Activated naive CD4-positive, alpha-beta T cell treated with anti-CD3 and anti-CD28 coated beads for 36 hours (primary cell): ENCODE measurements at regions of chr5 and their contacts with region 1.

Region 1: DNA sequence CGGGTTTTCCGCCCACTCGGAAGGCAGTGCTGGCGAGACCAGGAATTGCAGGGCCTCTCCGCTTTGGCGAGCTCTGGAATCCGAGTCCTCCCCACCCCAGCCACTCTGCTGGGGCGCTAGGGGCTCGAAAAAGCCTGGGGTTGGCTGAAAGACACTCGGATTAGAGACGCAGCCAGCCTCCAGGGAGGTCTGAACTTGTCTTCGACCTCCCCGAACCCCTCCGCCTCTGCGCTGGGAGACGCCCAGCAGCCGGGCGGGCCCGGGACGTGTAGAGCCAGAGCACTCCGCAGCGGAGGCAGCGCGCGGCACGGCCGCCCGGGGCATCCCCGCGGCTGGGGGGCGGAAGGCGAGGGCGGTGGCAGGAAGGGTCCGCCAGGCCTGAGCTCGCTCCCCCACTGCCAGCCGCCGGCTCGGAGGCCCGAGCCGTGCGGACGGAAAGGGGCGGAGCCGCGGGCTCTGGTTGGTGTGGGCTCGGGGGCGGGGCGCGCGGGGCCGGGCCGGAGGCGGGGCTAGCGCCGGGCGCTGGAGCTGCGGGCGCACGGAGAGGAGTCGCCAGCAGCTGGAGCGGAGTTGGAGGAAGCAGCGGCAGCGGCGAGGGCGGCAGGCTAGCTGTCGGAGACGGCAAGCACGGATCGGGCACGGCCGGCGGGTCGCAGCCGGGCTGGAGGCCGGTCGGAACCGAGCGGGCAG is at the start of gene PIK3R1:
- DNase-seq: peak; percentile 93
- H3K4me3 Mint-ChIP-seq: peak within 1 kb of the TSS; percentile 91
- H3K27ac Mint-ChIP-seq: peak within 1 kb of the TSS; percentile 95
- H3K4me1 Mint-ChIP-seq: peaks cover 42% of the 10 kb centered on the region
- H3K27me3 Mint-ChIP-seq: no peaks in the 10 kb centered on the region
- total RNA-seq, gene PIK3R1: 28.5 to 31.4 TPM

Region 2: GRCh38 chr5:68230285-68230684 is 14.9 kb after region 1 on chr5:
- CTCF ChIA-PET with region 1: interaction called, 5 read pairs
- intact Hi-C with region 1: loop called (anchors 1 kb)
- DNase-seq: no peak
- H3K4me3 Mint-ChIP-seq: no peak overlapping the region
- H3K27ac Mint-ChIP-seq: no peak overlapping the region
- H3K4me1 Mint-ChIP-seq: peaks cover 79% of the 10 kb centered on the region
- H3K27me3 Mint-ChIP-seq: no peaks in the 10 kb centered on the region

Region 3: GRCh38 chr5:68239487-68239886 is 24.1 kb after region 1 on chr5:
- CTCF ChIA-PET with region 1: interaction called, 5 read pairs
- intact Hi-C with region 1: loop called (anchors 1 kb)
- DNase-seq: peak; percentile 93
- H3K4me3 Mint-ChIP-seq: peak overlapping the region; percentile 36
- H3K27ac Mint-ChIP-seq: peak overlapping the region; percentile 72
- H3K4me1 Mint-ChIP-seq: peaks cover 80% of the 10 kb centered on the region
- H3K27me3 Mint-ChIP-seq: no peaks in the 10 kb centered on the region

Region 4: GRCh38 chr5:68272289-68272688 is 56.9 kb after region 1 on chr5:
- CTCF ChIA-PET with region 1: interaction called, 4 read pairs
- intact Hi-C with region 1: loop called (anchors 1 kb)
- DNase-seq: no peak
- H3K4me3 Mint-ChIP-seq: no peak overlapping the region
- H3K27ac Mint-ChIP-seq: peak overlapping the region; percentile 36
- H3K4me1 Mint-ChIP-seq: peaks cover 82% of the 10 kb centered on the region
- H3K27me3 Mint-ChIP-seq: no peaks in the 10 kb centered on the region

Region 5: GRCh38 chr5:68279984-68280383 is 64.6 kb after region 1 on chr5:
- CTCF ChIA-PET with region 1: no interaction called
- intact Hi-C with region 1: loop called (anchors 1 kb)
- DNase-seq: peak; percentile 55
- H3K4me3 Mint-ChIP-seq: peak overlapping the region; percentile 64
- H3K27ac Mint-ChIP-seq: peak overlapping the region; percentile 97
- H3K4me1 Mint-ChIP-seq: peaks cover 77% of the 10 kb centered on the region
- H3K27me3 Mint-ChIP-seq: no peaks in the 10 kb centered on the region